ENCODE measurements at regions of chr3 and their contacts with region 1.

Region 1: GRCh38 chr3:50542177-50543034 is 25.1 kb downstream of the C3orf18 start:
- DNase-seq: peak; percentile 50 to 94
- H3K4me3 ChIP-seq: no peak overlapping the region
- H3K27ac ChIP-seq: no peak overlapping the region
- H3K4me1 ChIP-seq: peaks cover 6 to 12% (median 10%) of the 10 kb centered on the region in 4 experiments
- H3K27me3 ChIP-seq: no peaks in the 10 kb centered on the region; a peak in 1 of 7 replicates
- CTCF ChIP-seq: peak in 2 of 3 experiments; percentile 94 to 97; a peak in 3 of 4 replicates
- EP300 ChIP-seq: no peak
- POLR2A ChIP-seq: no peak
- RAD21 ChIP-seq: peak; percentile 94 to 96

Region 2: GRCh38 chr3:50350527-50351322 is 191.7 kb before region 1 on chr3 and contains the starts of genes CYB561D2 and NPRL2:
- CTCF ChIA-PET with region 1: interaction called, 30 read pairs
- POLR2A ChIA-PET with region 1: no interaction called
- DNase-seq: peak; percentile 72 to 93
- H3K4me3 ChIP-seq: peak within 1 kb of the TSS; percentile 79 to 87 (median 82)
- H3K27ac ChIP-seq: no peak within 1 kb of the TSS
- H3K4me1 ChIP-seq: peaks cover 0 to 11% (median 8%) of the 10 kb centered on the region in 4 experiments; a peak in 5 of 7 replicates
- H3K27me3 ChIP-seq: peaks cover 0 to 4% (median 4%) of the 10 kb centered on the region in 4 experiments; a peak in 4 of 7 replicates
- CTCF ChIP-seq: no peak
- EP300 ChIP-seq: no peak
- POLR2A ChIP-seq: peak in 1 of 2 experiments; percentile 59; a peak in 2 of 3 replicates
- RAD21 ChIP-seq: no peak
- total RNA-seq, gene CYB561D2: 9.8 and 9.9 TPM in 2 replicates
- total RNA-seq, gene NPRL2: 25.0 and 28.4 TPM in 2 replicates

Region 3: DNA sequence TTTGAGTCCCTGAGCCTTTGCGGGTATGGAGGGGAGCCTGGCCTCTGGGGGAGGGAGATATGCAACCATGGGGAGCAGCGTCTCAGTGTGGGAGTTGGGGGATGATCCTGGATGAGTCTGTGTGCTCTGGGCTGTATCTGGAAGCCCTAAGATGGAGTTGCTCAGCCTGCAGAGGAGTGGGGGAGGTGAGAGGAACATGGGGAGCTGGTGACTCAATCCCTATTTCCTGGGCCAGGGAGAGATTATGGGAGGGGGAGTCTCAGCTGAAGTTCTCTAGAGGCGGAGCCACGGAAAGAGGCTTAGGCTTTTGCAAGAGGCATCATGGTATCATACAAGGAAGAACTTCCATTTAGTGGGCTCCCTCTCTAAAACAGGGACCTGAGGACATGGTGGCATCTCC is 123.6 kb before region 1 on chr3:
- CTCF ChIA-PET with region 1: interaction called, 473 read pairs
- POLR2A ChIA-PET with region 1: interaction called, 3 read pairs
- DNase-seq: no peak
- H3K4me3 ChIP-seq: no peak overlapping the region
- H3K27ac ChIP-seq: no peak overlapping the region
- H3K4me1 ChIP-seq: peaks cover 0 to 2% (median 0%) of the 10 kb centered on the region in 4 experiments; a peak in 1 of 7 replicates
- H3K27me3 ChIP-seq: no peaks in the 10 kb centered on the region; a peak in 1 of 7 replicates
- CTCF ChIP-seq: no peak
- EP300 ChIP-seq: no peak
- POLR2A ChIP-seq: no peak
- RAD21 ChIP-seq: no peak

Region 4: GRCh38 chr3:50454481-50455070 is 87.8 kb before region 1 on chr3:
- CTCF ChIA-PET with region 1: interaction called, 11 read pairs
- POLR2A ChIA-PET with region 1: no interaction called
- DNase-seq: peak in 1 of 2 experiments; percentile 67
- H3K4me3 ChIP-seq: no peak overlapping the region
- H3K27ac ChIP-seq: no peak overlapping the region
- H3K4me1 ChIP-seq: peaks cover 0 to 31% (median 18%) of the 10 kb centered on the region in 4 experiments; a peak in 6 of 7 replicates
- H3K27me3 ChIP-seq: no peaks in the 10 kb centered on the region
- CTCF ChIP-seq: no peak
- EP300 ChIP-seq: no peak
- POLR2A ChIP-seq: no peak
- RAD21 ChIP-seq: no peak

Region 5: GRCh38 chr3:50503504-50504342 is 38.7 kb before region 1 on chr3 and contains the start of gene CACNA2D2:
- CTCF ChIA-PET with region 1: interaction called, 68 read pairs
- POLR2A ChIA-PET with region 1: interaction called, 4 read pairs
- DNase-seq: peak in 1 of 2 experiments; percentile 82
- H3K4me3 ChIP-seq: peak within 1 kb of the TSS; percentile 47 to 94 (median 64)
- H3K27ac ChIP-seq: no peak within 1 kb of the TSS
- H3K4me1 ChIP-seq: peaks cover 0 to 15% (median 11%) of the 10 kb centered on the region in 4 experiments; a peak in 6 of 7 replicates
- H3K27me3 ChIP-seq: peaks cover 4 to 42% (median 27%) of the 10 kb centered on the region in 4 experiments
- CTCF ChIP-seq: 0 out of 4 replicates have a peak, but pooled peaks of 1 of the 3 experiments have one; percentile 4
- EP300 ChIP-seq: no peak
- POLR2A ChIP-seq: peak in 1 of 2 experiments; percentile 87; a peak in 2 of 3 replicates
- RAD21 ChIP-seq: peak in 1 of 2 experiments; percentile 19; a peak in 1 of 4 replicates
- total RNA-seq, gene CACNA2D2: 14.0 and 14.1 TPM in 2 replicates

Region 6: GRCh38 chr3:50525987-50526386 is 16.4 kb before region 1 on chr3:
- CTCF ChIA-PET with region 1: interaction called, 129 read pairs
- POLR2A ChIA-PET with region 1: interaction called, 6 read pairs
- DNase-seq: peak in 1 of 2 experiments; percentile 87
- H3K4me3 ChIP-seq: no peak overlapping the region
- H3K27ac ChIP-seq: no peak overlapping the region
- H3K4me1 ChIP-seq: peaks cover 3 to 37% (median 21%) of the 10 kb centered on the region in 4 experiments
- H3K27me3 ChIP-seq: peaks cover 0 to 9% (median 5%) of the 10 kb centered on the region in 4 experiments; a peak in 5 of 7 replicates
- CTCF ChIP-seq: no peak
- EP300 ChIP-seq: no peak
- POLR2A ChIP-seq: no peak
- RAD21 ChIP-seq: 0 out of 4 replicates have a peak, but pooled peaks of 1 of the 2 experiments have one; percentile 8

Measured in H1 (cell line).